Activated CD4-positive, alpha-beta memory T cell treated with anti-CD3 and anti-CD28 coated beads, Interleukin-2, amount 10 ng/mL, durations not matched to agents 7 days and 5 days (primary cell): ENCODE measurements at regions of chr6 and their contacts with region 1.

Region 1: GRCh38 chr6:32127717-32128592 is at the start of gene ATF6B:
- DNase-seq: peak; percentile 98
- H3K4me3 Mint-ChIP-seq: peak within 1 kb of the TSS; percentile 92
- H3K27ac Mint-ChIP-seq: peak within 1 kb of the TSS; percentile 92
- H3K4me1 Mint-ChIP-seq: peaks cover 48% of the 10 kb centered on the region
- H3K27me3 Mint-ChIP-seq: peaks cover 4% of the 10 kb centered on the region
- total RNA-seq, gene ATF6B: 142 to 147 TPM

Region 2: GRCh38 chr6:32177788-32178546 is 50.0 kb after region 1 on chr6 and contains the start of gene RNF5:
- CTCF ChIA-PET with region 1: no interaction called
- POLR2A ChIA-PET with region 1: interaction called, 31 read pairs
- DNase-seq: peak; percentile 95
- H3K4me3 Mint-ChIP-seq: peak within 1 kb of the TSS; percentile 91
- H3K27ac Mint-ChIP-seq: peak within 1 kb of the TSS; percentile 90
- H3K4me1 Mint-ChIP-seq: peaks cover 62% of the 10 kb centered on the region
- H3K27me3 Mint-ChIP-seq: no peaks in the 10 kb centered on the region
- total RNA-seq, gene RNF5: 44.0 to 45.4 TPM

Region 3: GRCh38 chr6:32195652-32195901 is 67.6 kb after region 1 on chr6:
- CTCF ChIA-PET with region 1: interaction called, 20 read pairs
- POLR2A ChIA-PET with region 1: interaction called, 16 read pairs
- DNase-seq: peak; percentile 100
- H3K4me3 Mint-ChIP-seq: peak overlapping the region; percentile 95
- H3K27ac Mint-ChIP-seq: peak overlapping the region; percentile 98
- H3K4me1 Mint-ChIP-seq: peaks cover 35% of the 10 kb centered on the region
- H3K27me3 Mint-ChIP-seq: peaks cover 2% of the 10 kb centered on the region